Activated CD8-positive, alpha-beta T cell treated with anti-CD3 and anti-CD28 coated beads, Interleukin-2, amount 10 ng/mL, durations not matched to agents 7 days and 5 days (primary cell): ENCODE measurements at regions of chr15 and their contacts with region 1.

Region 1: DNA sequence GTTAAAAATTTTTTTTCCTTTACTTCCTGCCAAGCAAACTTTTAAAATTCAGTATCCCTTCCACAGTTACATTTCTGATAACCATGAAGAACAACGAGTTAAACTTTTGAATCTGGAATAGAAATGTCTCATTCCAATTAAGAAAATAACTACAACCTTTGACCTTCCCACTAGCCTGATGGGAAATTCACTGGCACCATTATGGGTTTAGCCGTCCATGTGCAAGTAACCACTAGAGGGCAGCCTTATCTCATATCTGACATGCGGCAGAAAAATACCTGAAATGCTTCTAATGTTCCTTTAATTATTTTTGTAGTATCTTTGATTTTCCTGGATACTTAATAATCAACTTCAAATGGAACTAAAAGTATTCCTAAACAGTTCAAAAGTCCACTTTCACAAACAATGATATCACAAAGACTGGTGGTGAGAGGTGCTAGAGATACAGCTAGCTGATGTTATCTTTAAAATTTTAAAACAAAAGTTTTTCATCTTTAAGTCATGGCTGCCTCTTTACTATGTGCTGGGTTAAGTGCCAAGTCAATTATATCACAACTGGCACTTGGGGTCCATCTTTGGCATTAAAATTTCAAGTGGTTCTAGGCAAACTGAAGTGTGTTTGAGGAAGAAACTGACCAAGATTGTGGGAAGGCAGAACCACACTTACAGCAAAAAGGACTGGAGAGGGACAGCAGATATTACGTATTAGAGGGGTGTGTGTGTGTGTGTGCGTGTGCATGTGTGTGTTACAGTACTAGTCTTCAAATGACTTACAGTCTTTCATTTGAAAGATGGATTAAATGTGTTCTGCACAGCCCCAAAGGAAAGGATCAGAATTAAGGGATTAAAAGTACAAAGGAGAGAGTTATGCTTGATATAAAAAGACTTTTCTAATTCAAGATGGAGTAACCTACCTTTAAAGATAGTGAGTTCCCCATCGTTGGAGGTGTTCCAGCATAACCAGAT is 107.1 kb upstream of the ICE2 start:
- DNase-seq: peak; percentile 78
- ATAC-seq: no peak
- H3K4me3 Mint-ChIP-seq: peak overlapping the region; percentile 55
- H3K27ac Mint-ChIP-seq: peak overlapping the region; percentile 84
- H3K4me1 Mint-ChIP-seq: peaks cover 90% of the 10 kb centered on the region
- H3K27me3 Mint-ChIP-seq: no peaks in the 10 kb centered on the region

Region 2: DNA sequence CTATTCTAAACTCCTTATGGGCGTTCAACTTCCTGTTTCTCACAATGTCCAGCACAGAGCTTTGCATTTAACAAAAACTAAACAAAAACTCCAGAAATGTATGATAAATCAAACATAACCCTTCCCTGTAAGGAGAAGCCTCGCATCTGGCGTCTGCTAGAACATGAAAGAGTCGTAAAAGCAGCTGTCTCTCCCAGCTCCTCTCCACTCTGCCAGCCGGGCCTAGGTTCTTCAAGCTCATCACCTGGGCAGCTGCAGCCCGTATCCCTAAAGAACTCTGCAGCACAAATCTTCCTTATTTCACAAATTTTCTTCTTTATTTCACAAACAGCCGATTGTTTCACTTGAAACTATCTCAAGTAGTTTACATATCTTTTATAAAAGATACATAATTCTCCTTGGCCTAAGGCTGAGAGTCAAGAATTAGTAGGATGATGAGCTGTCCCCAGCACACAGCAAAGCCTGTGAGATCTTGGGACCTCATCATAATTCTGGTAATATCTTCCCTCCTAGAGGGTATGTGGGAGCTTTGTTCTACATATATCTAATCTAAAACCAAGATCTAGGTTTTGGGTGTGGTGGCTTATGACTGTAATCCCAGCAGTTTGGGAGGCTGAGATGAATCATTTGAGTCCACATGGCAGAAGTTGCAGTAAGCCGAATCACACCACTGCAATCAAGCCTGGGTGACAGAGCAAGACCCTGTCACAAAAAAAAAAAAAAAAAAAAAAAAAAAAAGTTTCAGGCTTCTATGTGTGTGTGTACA is 223.5 kb before region 1 on chr15:
- CTCF ChIA-PET with region 1: interaction called, 15 read pairs
- POLR2A ChIA-PET with region 1: no interaction called
- DNase-seq: peak; percentile 41
- ATAC-seq: peak; percentile 80
- H3K4me3 Mint-ChIP-seq: no peak overlapping the region
- H3K27ac Mint-ChIP-seq: peak overlapping the region; percentile 35
- H3K4me1 Mint-ChIP-seq: peaks cover 26% of the 10 kb centered on the region
- H3K27me3 Mint-ChIP-seq: no peaks in the 10 kb centered on the region

Region 3: GRCh38 chr15:60520825-60521368 is 65.1 kb before region 1 on chr15:
- CTCF ChIA-PET with region 1: interaction called, 102 read pairs
- POLR2A ChIA-PET with region 1: interaction called, 3 read pairs
- DNase-seq: peak; percentile 88
- ATAC-seq: peak; percentile 75
- H3K4me3 Mint-ChIP-seq: no peak overlapping the region
- H3K27ac Mint-ChIP-seq: peak overlapping the region; percentile 44
- H3K4me1 Mint-ChIP-seq: peaks cover 30% of the 10 kb centered on the region
- H3K27me3 Mint-ChIP-seq: no peaks in the 10 kb centered on the region

Region 4: DNA sequence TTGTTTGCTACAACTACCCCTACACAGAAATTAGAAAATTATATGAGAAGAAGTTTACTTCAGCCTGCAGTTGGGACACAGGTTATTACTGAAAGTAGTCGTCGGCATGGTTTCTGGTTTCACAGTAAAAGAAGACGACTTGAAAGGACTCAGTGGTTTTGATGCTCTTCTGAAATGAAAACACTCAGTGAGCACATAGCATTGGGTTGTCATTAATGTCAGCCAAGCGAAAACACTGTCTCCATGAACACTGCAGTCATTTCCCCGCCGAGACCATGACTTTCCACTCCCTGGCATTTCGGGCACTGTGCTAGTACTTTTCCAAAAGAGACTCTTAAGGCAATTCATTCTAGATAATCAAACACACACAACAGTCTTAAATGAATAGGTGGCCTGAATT is 37.9 kb before region 1 on chr15:
- CTCF ChIA-PET with region 1: interaction called, 84 read pairs
- POLR2A ChIA-PET with region 1: interaction called, 13 read pairs
- DNase-seq: peak; percentile 60
- ATAC-seq: peak; percentile 80
- H3K4me3 Mint-ChIP-seq: peak overlapping the region; percentile 60
- H3K27ac Mint-ChIP-seq: peak overlapping the region; percentile 90
- H3K4me1 Mint-ChIP-seq: peaks cover 94% of the 10 kb centered on the region
- H3K27me3 Mint-ChIP-seq: no peaks in the 10 kb centered on the region

Region 5: DNA sequence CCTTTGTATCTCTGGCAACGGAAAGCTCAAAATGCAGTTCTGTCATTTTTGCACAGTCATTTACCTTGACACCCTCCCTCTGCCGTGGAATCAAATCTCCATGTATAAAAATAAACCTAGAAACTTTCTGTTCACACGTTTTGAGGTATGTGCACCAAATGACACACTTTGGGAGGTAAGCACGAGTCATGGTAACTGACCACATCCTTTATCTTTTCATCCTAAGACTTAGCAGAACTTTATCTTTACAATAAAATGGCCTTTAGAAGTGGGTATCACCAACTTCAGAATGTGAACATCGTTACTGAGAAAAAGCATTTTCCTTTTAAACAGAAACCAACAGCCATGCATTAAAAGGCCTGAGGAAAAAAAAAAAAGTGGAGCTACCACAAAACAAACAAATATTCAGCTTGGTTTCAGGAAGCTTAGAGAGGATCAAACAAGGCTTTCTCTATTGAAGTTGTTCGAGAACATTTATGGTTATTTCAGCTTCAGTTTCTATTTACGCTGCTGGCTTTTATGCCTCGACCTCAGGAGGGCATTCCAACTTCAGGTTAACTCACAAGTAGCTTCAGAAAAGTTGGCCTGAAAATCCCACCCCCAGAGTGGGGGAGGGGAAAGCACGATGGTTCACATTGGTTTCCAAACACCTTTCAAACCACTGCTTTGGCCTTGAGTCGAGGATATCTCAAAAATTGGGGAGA is 64.0 kb after region 1 on chr15:
- CTCF ChIA-PET with region 1: interaction called, 28 read pairs
- POLR2A ChIA-PET with region 1: interaction called, 4 read pairs
- DNase-seq: peak; percentile 66
- ATAC-seq: peak; percentile 85
- H3K4me3 Mint-ChIP-seq: peak overlapping the region; percentile 70
- H3K27ac Mint-ChIP-seq: peak overlapping the region; percentile 74
- H3K4me1 Mint-ChIP-seq: peaks cover 41% of the 10 kb centered on the region
- H3K27me3 Mint-ChIP-seq: no peaks in the 10 kb centered on the region

Region 6: DNA sequence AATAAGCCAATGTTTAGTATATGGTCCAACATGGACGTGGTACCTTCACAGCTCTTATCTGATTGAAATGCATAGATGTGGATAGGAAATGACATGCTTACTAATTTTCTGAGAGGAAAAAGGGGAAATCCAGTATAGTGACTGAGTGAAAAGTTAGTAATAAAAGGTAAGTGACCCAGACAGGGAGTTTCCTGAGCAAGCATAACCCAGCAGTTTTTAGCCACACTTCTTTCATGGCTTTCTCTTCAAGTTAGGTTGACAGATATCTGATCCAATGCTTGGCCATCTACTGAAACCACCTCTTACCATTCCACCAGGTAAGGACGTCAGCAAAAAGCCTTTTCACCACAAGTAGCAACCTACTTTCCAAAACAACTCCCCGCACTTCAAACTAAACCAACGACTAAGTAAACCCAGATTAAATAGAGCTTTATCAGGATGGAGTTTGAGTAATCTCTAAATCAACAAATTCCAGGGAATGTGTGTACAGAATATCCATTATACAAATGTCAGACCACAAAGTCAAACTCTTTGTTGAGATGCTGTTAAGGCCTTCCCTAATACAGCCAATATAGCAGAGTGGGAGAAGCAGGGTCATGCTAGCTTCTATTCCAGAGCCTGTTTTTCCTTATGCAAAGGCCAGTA is 313.4 kb after region 1 on chr15:
- CTCF ChIA-PET with region 1: interaction called, 28 read pairs
- POLR2A ChIA-PET with region 1: no interaction called
- DNase-seq: no peak
- ATAC-seq: peak; percentile 53
- H3K4me3 Mint-ChIP-seq: no peak overlapping the region
- H3K27ac Mint-ChIP-seq: no peak overlapping the region
- H3K4me1 Mint-ChIP-seq: peaks cover 15% of the 10 kb centered on the region
- H3K27me3 Mint-ChIP-seq: peaks cover 2% of the 10 kb centered on the region

Region 7: GRCh38 chr15:60932051-60932915 is 346.3 kb after region 1 on chr15:
- CTCF ChIA-PET with region 1: interaction called, 32 read pairs
- POLR2A ChIA-PET with region 1: no interaction called
- DNase-seq: peak; percentile 34
- ATAC-seq: peak; percentile 49
- H3K4me3 Mint-ChIP-seq: no peak overlapping the region
- H3K27ac Mint-ChIP-seq: no peak overlapping the region
- H3K4me1 Mint-ChIP-seq: peaks cover 9% of the 10 kb centered on the region
- H3K27me3 Mint-ChIP-seq: peaks cover 30% of the 10 kb centered on the region